ENCODE measurements at regions of chr11 and their contacts with region 1.

Region 1: GRCh38 chr11:109184376-109184775 is 237.6 kb upstream of the C11orf87 start:
- DNase-seq: no peak
- ATAC-seq: no peak
- H3K4me3 ChIP-seq: no peak overlapping the region
- H3K27ac ChIP-seq: no peak overlapping the region
- H3K4me1 ChIP-seq: no peaks in the 10 kb centered on the region
- H3K27me3 ChIP-seq: no peaks in the 10 kb centered on the region
- CTCF ChIP-seq: no peak
- POLR2A ChIP-seq: no peak
- RAD21 ChIP-seq: no peak

Region 2: DNA sequence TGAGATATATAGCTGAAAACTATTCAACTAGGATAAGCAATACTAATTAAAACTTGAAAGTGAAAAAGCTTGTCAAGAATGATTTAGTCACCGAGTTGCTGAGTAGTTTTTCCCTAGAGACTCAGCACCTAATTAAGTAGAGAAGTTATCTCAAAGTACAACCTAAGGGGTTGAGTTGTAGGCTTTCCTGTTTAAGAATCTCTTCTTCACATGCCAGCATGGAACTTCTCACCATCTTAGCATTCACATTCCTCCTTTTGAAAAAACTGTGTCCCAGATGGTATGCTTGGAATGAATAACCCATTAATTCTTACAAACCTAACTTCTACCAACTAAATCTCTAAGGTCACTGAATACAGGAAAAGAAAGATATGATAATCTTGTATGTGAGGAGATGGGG is 605.5 kb after region 1 on chr11:
- CTCF ChIA-PET with region 1: interaction called, 13 read pairs
- POLR2A ChIA-PET with region 1: no interaction called
- dilution Hi-C with region 1: no loop called
- in situ Hi-C with region 1: no loop called
- intact Hi-C with region 1: no loop called
- DNase-seq: peak; percentile 28
- ATAC-seq: peak; percentile 66
- H3K4me3 ChIP-seq: no peak overlapping the region
- H3K27ac ChIP-seq: no peak overlapping the region
- H3K4me1 ChIP-seq: no peaks in the 10 kb centered on the region
- H3K27me3 ChIP-seq: no peaks in the 10 kb centered on the region; the same call in 1 of the 2 replicates
- CTCF ChIP-seq: no peak
- POLR2A ChIP-seq: no peak
- RAD21 ChIP-seq: no peak

Region 3: GRCh38 chr11:110261195-110262140 is 1077.1 kb after region 1 on chr11:
- CTCF ChIA-PET with region 1: no interaction called
- POLR2A ChIA-PET with region 1: no interaction called
- dilution Hi-C with region 1: no loop called
- in situ Hi-C with region 1: no loop called
- intact Hi-C with region 1: no loop called
- DNase-seq: peak; percentile 54
- ATAC-seq: peak; percentile 76
- H3K4me3 ChIP-seq: no peak overlapping the region
- H3K27ac ChIP-seq: peak overlapping the region; percentile 22; the same call in 1 of the 2 replicates
- H3K4me1 ChIP-seq: no peaks in the 10 kb centered on the region; the same call in 1 of the 2 replicates
- H3K27me3 ChIP-seq: no peaks in the 10 kb centered on the region
- CTCF ChIP-seq: no peak
- POLR2A ChIP-seq: no peak
- RAD21 ChIP-seq: no peak